Left colon (tissue), 2 donors: ENCODE measurements at regions of chr20 and their contacts with region 1.

Region 1: GRCh38 chr20:41173161-41173721 is 35.9 kb downstream of the PLCG1 start:
- DNase-seq: peak; percentile 60 to 83
- ATAC-seq: peak; percentile 91

Region 2: DNA sequence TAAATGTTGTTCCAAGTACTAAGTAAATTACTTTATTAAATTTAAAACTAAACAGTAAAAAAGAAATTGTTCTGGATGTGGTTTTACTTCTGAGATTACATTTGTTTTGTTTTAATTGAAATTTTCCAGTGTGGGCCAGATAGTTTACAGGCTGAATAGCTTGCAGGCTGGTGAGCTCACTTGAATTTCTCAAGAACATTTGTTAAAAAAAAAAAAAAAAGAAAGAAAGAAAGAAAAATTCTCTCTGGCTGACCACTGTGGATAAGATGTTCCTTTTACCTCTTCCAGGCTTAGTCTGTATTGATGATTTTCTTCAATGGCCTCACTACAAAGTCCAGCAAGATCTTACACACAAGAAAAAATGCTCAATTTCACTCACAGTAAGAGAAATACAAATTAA is 49.5 kb after region 1 on chr20:
- intact Hi-C with region 1: no loop called
- DNase-seq: no peak
- ATAC-seq: no peak

Region 3: GRCh38 chr20:41232973-41233926 is 60.0 kb after region 1 on chr20:
- intact Hi-C with region 1: loop called in 1 of 2 experiments (anchors 5 kb)
- DNase-seq: no peak
- ATAC-seq: peak; percentile 70

Region 4: DNA sequence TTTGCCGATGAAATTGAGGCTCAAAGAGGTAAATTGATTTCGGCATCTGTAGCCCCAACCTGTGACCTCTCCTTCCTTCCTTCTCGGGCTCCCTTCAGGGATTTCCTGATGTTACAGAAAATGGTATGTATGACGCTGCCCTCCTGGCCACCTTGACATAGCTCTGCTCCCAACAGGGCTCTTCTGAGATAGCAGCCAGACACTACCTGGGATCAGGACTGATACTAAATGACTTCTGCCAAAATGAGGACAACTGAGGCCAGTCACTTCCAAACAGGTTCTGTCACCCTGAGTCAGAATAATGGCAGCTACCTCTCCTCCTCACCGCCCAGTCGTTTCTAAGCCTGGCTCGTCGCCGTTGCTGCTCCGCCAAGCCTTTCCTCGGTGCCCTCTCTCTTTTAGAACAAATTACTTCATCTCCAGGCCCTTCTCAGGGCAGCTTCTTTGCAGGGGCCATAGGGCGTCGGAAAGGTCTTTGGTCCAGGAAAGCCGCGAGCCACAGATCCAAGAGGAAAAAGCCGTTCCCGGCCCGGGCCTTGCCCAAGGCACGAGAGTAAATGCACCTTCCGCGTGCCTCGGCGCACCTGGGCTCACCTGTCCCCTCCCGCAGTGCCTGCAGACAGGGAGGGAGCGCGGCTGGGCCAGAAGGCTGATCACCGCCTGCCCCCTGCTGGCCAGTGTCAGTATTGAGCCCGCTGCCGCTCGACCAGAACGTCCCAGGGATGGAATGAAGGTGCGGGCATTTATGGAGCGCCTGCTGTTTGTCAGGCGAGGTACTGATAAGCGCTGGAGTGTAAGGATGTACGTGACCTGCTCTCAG is 166.5 kb after region 1 on chr20:
- intact Hi-C with region 1: loop called (anchors 2 to 10 kb)
- DNase-seq: peak; percentile 91 to 94
- ATAC-seq: peak; percentile 74